ENCODE measurements at regions of chr13 and their contacts with region 1.

Region 1: DNA sequence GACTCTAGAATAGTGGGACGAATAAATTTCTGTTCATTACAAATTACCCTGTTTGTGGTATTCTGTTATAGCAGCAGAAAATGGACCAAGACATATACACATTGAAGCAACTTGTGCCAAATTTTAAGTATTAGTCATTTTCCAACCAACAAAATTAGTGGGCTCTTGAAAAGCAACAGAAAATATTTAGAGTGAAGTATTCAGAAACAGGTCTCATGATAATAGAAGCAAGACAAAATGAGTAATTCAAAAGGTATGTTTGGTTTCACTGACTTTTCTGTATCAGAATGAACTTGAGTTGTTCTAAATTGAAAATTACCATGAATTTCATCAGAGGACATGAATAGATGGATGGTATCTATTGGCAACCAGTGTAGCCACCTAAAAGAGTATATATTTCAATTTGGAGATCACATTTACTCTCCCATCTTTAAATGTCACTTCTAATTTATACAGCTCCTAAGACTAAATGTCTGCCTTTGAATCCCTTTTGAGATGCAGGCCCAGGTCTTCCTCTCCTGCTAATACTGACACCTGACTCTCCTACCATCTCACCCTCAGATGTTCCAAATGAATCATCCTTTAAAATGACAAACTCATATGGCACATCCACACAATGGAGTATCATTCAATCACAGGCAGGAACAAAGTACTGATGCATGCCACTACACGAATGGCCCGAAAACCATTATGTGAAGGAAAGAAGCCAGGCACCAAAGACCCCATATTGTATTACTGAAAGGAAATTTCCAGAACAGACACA is 40.7 kb upstream of the DOCK9 start:
- DNase-seq: no peak
- H3K4me3 ChIP-seq: no peak overlapping the region
- H3K27ac ChIP-seq: no peak overlapping the region
- H3K4me1 ChIP-seq: peaks cover 10% of the 10 kb centered on the region
- H3K27me3 ChIP-seq: no peaks in the 10 kb centered on the region
- CTCF ChIP-seq: no peak
- POLR2A ChIP-seq: no peak

Region 2: GRCh38 chr13:97189928-97190327 is 1828.7 kb before region 1 on chr13:
- intact Hi-C with region 1: loop called (anchors 5 kb)
- DNase-seq: no peak
- H3K4me3 ChIP-seq: no peak overlapping the region
- H3K27ac ChIP-seq: no peak overlapping the region
- H3K4me1 ChIP-seq: peaks cover 14% of the 10 kb centered on the region
- H3K27me3 ChIP-seq: no peaks in the 10 kb centered on the region
- CTCF ChIP-seq: no peak
- POLR2A ChIP-seq: no peak

Region 3: DNA sequence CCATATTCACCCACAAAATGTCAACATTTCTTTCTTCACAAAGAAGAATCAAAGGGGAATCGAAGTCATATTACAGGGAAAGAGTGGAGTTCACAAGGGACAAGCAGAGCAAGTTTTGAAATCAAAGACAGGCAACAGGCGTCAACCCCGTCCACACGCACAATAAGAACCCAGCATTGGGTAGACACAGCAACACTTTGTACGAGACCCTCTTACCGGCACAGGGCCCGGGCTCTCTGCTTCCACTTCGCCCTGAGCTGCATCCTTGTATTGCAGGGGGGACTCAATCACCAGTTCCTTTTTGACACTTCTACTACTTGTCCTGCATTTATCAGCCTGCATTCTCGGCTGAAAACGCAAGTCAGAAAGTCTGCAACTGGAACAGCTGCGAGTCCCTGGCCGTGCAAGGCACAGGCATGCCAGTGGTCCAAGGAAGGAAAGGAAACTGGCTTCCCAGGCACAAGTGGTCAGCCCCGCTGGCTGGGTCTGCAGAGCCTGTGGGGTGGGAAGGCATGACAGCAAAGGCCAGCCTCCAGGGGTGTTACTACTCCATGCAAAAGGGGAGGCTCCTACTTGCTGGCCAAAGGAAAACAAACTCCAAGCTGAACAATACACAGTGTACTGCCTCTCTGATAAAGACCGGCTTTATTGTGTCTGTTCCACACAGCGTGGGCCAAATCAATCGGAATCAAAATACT is 40.9 kb before region 1 on chr13 and contains the start of gene DOCK9:
- intact Hi-C with region 1: no loop called
- DNase-seq: no peak
- H3K4me3 ChIP-seq: peak within 1 kb of the TSS; percentile 41 to 45
- H3K27ac ChIP-seq: peak within 1 kb of the TSS; percentile 79
- H3K4me1 ChIP-seq: peaks cover 31% of the 10 kb centered on the region
- H3K27me3 ChIP-seq: no peaks in the 10 kb centered on the region
- CTCF ChIP-seq: peak in 1 of 3 experiments; percentile 33
- POLR2A ChIP-seq: no peak
- total RNA-seq, gene DOCK9: 88.4 TPM

Measured in vagina (tissue), 2 donors.